IMR-90 (cell line): ENCODE measurements at regions of chr11 and their contacts with region 1.

Region 1: GRCh38 chr11:15159085-15159484 is 44.4 kb downstream of the INSC start:
- DNase-seq: peak; percentile 49
- ATAC-seq: no peak
- H3K4me3 ChIP-seq: no peak overlapping the region
- H3K27ac ChIP-seq: peak overlapping the region; percentile 65
- H3K4me1 ChIP-seq: peaks cover 32% of the 10 kb centered on the region
- H3K27me3 ChIP-seq: no peaks in the 10 kb centered on the region
- CTCF ChIP-seq: peak; percentile 58
- POLR2A ChIP-seq: no peak
- RAD21 ChIP-seq: peak; percentile 71

Region 2: GRCh38 chr11:15101072-15101709 is 57.9 kb before region 1 on chr11:
- CTCF ChIA-PET with region 1: interaction called, 45 read pairs
- POLR2A ChIA-PET with region 1: interaction called, 3 read pairs
- dilution Hi-C with region 1: no loop called
- in situ Hi-C with region 1: no loop called
- intact Hi-C with region 1: loop called (anchors 1 kb)
- DNase-seq: peak; percentile 73
- ATAC-seq: peak; percentile 95
- H3K4me3 ChIP-seq: no peak overlapping the region
- H3K27ac ChIP-seq: no peak overlapping the region
- H3K4me1 ChIP-seq: peaks cover 10% of the 10 kb centered on the region; the same call in 1 of the 2 replicates
- H3K27me3 ChIP-seq: no peaks in the 10 kb centered on the region; the same call in 1 of the 2 replicates
- CTCF ChIP-seq: peak; percentile 97
- POLR2A ChIP-seq: no peak
- RAD21 ChIP-seq: peak; percentile 99

Region 3: DNA sequence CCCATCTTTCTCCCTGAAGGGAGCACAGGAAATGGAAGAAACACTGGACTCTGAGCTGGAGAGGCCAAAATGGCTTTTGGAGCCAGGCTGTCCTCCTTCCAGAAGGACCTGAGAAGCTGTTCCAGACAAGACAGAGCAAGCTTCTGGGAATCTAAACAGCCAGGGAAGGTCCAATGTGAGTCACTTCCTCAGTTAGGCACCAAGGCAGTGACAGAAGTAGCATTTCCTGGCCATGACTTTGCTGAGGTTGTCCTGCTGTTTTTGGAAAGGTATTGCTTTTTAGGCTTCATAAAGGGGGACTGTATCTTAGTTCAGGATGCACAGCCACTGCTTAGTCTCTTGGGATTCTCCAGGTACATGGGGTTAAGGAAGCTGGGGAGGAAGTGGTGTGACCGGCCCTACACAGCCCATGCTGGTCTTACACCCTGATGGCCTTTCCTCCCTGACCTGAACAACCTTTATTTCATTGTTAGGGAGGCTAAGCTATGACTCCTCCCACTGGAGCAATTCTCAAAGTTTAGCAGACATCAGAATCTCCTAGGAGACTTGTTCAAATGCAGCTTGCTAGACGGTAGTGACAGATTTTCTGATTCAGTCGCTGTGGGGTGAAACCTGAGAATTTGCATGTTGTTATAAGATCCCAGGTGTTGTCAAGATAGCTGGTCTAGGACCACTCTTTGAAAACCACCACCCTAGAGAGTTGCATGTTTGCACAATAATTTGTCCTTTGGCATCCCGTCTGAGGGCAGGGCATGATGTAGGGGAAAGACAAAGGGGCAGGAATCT is 51.2 kb before region 1 on chr11:
- CTCF ChIA-PET with region 1: interaction called, 16 read pairs
- POLR2A ChIA-PET with region 1: interaction called, 3 read pairs
- dilution Hi-C with region 1: no loop called
- in situ Hi-C with region 1: loop called (anchors 5 kb)
- intact Hi-C with region 1: no loop called
- DNase-seq: peak; percentile 55
- ATAC-seq: peak; percentile 19; the same call in 1 of the 2 replicates
- H3K4me3 ChIP-seq: no peak overlapping the region
- H3K27ac ChIP-seq: peak overlapping the region; percentile 12; the same call in 1 of the 2 replicates
- H3K4me1 ChIP-seq: peaks cover 30% of the 10 kb centered on the region
- H3K27me3 ChIP-seq: no peaks in the 10 kb centered on the region
- CTCF ChIP-seq: no peak
- POLR2A ChIP-seq: no peak
- RAD21 ChIP-seq: no peak

Region 4: DNA sequence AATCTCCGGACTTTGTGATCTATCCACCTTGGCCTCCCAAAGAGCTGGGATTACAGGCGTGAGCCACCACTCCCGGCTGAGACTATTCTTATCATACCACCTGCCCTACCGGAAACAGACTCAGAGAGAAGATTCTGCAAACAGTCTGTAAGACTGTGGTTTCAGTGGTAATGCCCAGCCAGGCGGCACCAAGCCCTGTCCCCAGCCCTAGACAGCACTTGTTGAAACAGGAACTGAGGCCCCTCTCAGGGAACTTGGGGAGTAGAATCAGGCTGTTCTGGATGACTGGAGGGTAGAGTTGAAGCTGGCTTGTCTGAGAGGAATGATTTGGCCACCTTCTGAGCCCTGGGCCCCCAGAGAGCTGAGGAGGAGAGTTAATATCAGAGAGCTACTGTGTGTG is 45.7 kb before region 1 on chr11:
- CTCF ChIA-PET with region 1: interaction called, 6 read pairs
- POLR2A ChIA-PET with region 1: no interaction called
- dilution Hi-C with region 1: no loop called
- in situ Hi-C with region 1: loop called (anchors 5 kb)
- intact Hi-C with region 1: no loop called
- DNase-seq: no peak
- ATAC-seq: no peak
- H3K4me3 ChIP-seq: no peak overlapping the region
- H3K27ac ChIP-seq: no peak overlapping the region
- H3K4me1 ChIP-seq: peaks cover 4% of the 10 kb centered on the region; the same call in 1 of the 2 replicates
- H3K27me3 ChIP-seq: no peaks in the 10 kb centered on the region
- CTCF ChIP-seq: no peak
- POLR2A ChIP-seq: no peak
- RAD21 ChIP-seq: no peak

Region 5: GRCh38 chr11:15146271-15147003 is 12.6 kb before region 1 on chr11:
- CTCF ChIA-PET with region 1: interaction called, 11 read pairs
- POLR2A ChIA-PET with region 1: no interaction called
- dilution Hi-C with region 1: no loop called
- in situ Hi-C with region 1: no loop called
- intact Hi-C with region 1: no loop called
- DNase-seq: peak; percentile 59
- ATAC-seq: peak; percentile 65
- H3K4me3 ChIP-seq: no peak overlapping the region
- H3K27ac ChIP-seq: no peak overlapping the region
- H3K4me1 ChIP-seq: peaks cover 2% of the 10 kb centered on the region; the same call in 1 of the 2 replicates
- H3K27me3 ChIP-seq: no peaks in the 10 kb centered on the region
- CTCF ChIP-seq: no peak
- POLR2A ChIP-seq: no peak
- RAD21 ChIP-seq: no peak

Region 6: DNA sequence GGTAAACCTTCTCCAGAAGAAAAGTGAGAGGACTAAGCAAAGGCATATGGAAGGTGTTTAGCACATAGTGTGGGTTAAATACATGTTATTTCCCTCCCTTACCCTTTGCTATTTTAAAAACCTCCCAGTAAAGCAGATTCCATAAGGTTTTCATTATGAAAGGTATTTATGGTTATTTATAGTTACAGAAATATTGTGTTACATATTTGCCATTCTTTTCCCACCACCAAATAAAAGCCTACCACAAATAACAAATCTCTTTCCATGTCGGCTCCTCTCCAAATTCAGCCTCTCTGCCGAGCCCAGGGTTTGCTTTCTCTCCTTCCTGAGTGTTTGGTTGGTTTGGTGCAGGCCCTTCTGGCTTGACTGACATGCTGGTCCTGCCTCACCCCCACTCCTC is 20.1 kb after region 1 on chr11:
- CTCF ChIA-PET with region 1: interaction called, 7 read pairs
- POLR2A ChIA-PET with region 1: no interaction called
- dilution Hi-C with region 1: no loop called
- in situ Hi-C with region 1: no loop called
- intact Hi-C with region 1: loop called (anchors 2 kb)
- DNase-seq: peak; percentile 54
- ATAC-seq: peak; percentile 71
- H3K4me3 ChIP-seq: no peak overlapping the region
- H3K27ac ChIP-seq: peak overlapping the region; percentile 15; the same call in 1 of the 2 replicates
- H3K4me1 ChIP-seq: peaks cover 9% of the 10 kb centered on the region
- H3K27me3 ChIP-seq: no peaks in the 10 kb centered on the region
- CTCF ChIP-seq: no peak
- POLR2A ChIP-seq: no peak
- RAD21 ChIP-seq: no peak

Region 7: DNA sequence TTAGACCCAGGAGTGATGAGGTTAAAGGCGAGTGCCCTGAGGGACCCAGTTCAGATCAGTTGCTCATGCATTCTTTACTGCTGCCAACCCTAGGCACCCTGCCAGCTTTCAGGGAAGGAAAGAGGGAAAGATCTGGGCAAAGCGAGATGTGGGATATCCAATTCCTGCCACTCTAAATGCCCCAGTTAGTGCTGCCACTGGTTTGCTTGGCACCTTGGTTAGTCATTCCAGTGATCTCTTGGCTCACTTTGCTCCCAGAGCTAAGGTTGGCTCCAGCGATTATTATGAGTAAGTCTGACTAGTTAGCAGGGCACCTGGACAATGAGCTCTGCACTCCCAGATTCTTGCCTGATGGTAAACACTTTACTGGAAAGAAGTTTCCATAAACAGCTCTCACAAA is 40.6 kb after region 1 on chr11:
- CTCF ChIA-PET with region 1: interaction called, 8 read pairs
- POLR2A ChIA-PET with region 1: no interaction called
- dilution Hi-C with region 1: no loop called
- in situ Hi-C with region 1: no loop called
- intact Hi-C with region 1: loop called (anchors 5 kb)
- DNase-seq: peak; percentile 71
- ATAC-seq: peak; percentile 12; the same call in 1 of the 2 replicates
- H3K4me3 ChIP-seq: no peak overlapping the region
- H3K27ac ChIP-seq: no peak overlapping the region
- H3K4me1 ChIP-seq: peaks cover 24% of the 10 kb centered on the region
- H3K27me3 ChIP-seq: no peaks in the 10 kb centered on the region
- CTCF ChIP-seq: no peak
- POLR2A ChIP-seq: no peak
- RAD21 ChIP-seq: no peak